Right ventricle myocardium inferior (tissue), 1 donor: ENCODE measurements at regions of chr10 and their contacts with region 1.

Region 1: DNA sequence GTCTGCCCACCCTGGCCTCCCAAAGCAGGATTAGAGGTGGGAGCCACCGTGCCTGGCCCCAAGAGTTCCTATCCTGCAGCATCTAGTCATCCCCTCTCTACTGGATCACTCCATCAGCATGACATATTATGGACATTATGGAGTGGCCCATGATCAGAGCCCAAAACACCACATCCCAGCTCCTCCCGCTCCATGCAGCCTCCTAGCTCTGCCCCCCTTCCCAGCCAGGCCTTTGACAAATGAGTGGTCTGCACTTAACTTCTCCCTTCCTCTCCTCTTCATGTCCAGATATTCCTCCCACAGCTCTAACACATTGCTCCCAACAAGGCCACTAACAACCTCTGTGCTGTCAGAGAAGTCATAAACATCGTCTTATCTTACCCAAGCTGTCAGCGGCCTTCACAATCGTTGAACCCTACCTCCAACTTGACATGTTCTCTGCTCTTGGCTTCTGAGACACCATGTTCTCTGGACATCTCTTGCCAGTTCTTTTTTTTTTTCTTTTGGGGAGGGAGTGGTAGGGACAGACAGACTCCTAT is 187.6 kb downstream of the NSUN6 start:
- DNase-seq: no peak
- ATAC-seq: peak; percentile 88

Region 2: DNA sequence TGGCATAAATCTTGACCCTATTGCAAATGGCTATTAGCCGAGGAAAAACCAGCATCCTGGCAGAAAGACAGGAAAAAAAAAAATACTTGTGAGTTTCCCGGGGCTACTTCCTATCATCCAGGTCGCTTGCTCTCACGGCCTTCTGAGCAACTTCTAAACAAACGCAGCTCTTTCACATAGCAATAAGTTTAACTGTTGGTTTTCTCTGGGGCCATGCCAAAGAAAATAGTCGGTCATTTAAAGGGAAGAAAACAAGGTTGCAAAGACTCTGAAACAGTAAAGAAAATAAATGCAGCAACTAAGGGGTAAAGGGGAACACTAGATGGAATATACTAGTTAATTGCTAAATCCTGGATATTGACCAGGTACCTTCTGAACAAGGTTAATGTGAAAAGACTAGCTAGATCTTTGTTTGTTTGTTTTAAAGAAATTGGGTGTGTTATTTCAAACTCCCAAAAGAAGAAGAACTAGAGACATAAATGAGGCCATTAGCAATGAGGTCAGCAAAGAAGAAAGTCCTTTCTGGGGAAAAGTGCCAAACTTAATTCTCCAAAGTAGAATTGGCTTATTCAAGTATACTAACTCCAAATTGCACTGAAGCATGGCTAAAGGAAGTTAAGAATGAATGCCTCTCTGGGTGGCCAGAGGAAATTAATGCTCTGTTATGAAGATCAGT is 457.8 kb before region 1 on chr10:
- intact Hi-C with region 1: no loop called
- DNase-seq: no peak
- ATAC-seq: no peak

Region 3: GRCh38 chr10:18409599-18410397 is 53.9 kb before region 1 on chr10:
- intact Hi-C with region 1: loop called (anchors 5 kb)
- DNase-seq: no peak
- ATAC-seq: no peak

Region 4: GRCh38 chr10:18429335-18429734 is 34.4 kb before region 1 on chr10:
- intact Hi-C with region 1: loop called (anchors 5 kb)
- DNase-seq: no peak
- ATAC-seq: no peak